MCF 10A (cell line): ENCODE measurements at regions of chr2 and their contacts with region 1.

Region 1: DNA sequence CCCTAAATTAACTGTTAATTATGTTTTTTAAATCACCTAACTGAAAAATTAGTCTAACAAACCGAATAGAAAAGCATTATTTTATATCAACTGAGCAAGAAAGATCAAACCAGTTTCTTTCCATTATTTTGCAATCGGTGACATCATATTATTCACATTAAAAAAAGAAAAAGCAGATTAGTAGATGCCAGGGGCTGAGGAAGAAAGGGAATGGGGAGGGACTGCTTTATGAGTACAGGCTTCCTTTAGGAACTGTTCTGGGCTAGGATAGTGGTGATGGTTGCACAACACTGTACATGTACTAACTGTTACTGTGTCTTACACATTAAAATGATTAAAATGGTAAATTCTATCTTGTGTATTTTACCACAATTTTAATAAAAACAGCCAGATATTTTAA is 59.3 kb downstream of the COBLL1 start:
- DNase-seq: peak; percentile 82
- H3K4me3 Mint-ChIP-seq: no peak overlapping the region
- H3K27ac Mint-ChIP-seq: peak overlapping the region; percentile 73
- H3K4me1 Mint-ChIP-seq: peaks cover 36% of the 10 kb centered on the region
- H3K27me3 Mint-ChIP-seq: no peaks in the 10 kb centered on the region
- CTCF ChIP-seq: no peak

Region 2: DNA sequence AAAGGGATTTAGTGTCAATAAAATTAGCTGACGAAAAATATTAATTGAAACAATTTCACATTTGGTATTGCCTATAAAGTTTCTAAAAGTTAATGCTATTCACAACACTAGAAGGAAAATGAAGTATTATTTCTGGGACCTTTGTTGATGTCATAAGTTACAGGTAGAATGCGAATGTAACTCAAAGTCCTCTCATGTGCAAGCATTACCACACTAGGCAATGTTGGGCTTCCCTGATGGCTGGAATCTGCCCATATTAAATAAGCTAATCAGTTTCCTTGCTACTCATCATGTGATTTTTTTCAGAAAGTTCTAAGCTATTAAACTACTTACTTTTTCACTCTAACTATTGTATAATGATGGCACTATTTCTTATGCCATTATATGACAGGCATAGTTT is 14.7 kb after region 1 on chr2:
- CTCF ChIA-PET with region 1: interaction called, 11 read pairs
- POLR2A ChIA-PET with region 1: interaction called, 4 read pairs
- intact Hi-C with region 1: no loop called
- DNase-seq: no peak
- H3K4me3 Mint-ChIP-seq: no peak overlapping the region
- H3K27ac Mint-ChIP-seq: no peak overlapping the region
- H3K4me1 Mint-ChIP-seq: peaks cover 22% of the 10 kb centered on the region
- H3K27me3 Mint-ChIP-seq: no peaks in the 10 kb centered on the region
- CTCF ChIP-seq: no peak